OCI-LY7 (cell line): ENCODE measurements at regions of chr19 and their contacts with region 1.

Region 1: GRCh38 chr19:33406521-33407139 is 33.1 kb downstream of the CEBPG start:
- DNase-seq: peak; percentile 56
- H3K4me3 ChIP-seq: no peak overlapping the region
- H3K27ac ChIP-seq: no peak overlapping the region
- H3K4me1 ChIP-seq: no peaks in the 10 kb centered on the region
- CTCF ChIP-seq: peak; percentile 82

Region 2: GRCh38 chr19:33125929-33126388 is 280.7 kb before region 1 on chr19:
- CTCF ChIA-PET with region 1: no interaction called
- POLR2A ChIA-PET with region 1: no interaction called
- intact Hi-C with region 1: loop called (anchors 5 kb)
- DNase-seq: peak; percentile 59
- H3K4me3 ChIP-seq: no peak overlapping the region
- H3K27ac ChIP-seq: no peak overlapping the region
- H3K4me1 ChIP-seq: no peaks in the 10 kb centered on the region
- CTCF ChIP-seq: peak; percentile 90

Region 3: GRCh38 chr19:33241530-33242101 is 165.0 kb before region 1 on chr19:
- CTCF ChIA-PET with region 1: no interaction called
- POLR2A ChIA-PET with region 1: no interaction called
- intact Hi-C with region 1: loop called (anchors 1 kb)
- DNase-seq: peak; percentile 29
- H3K4me3 ChIP-seq: no peak overlapping the region
- H3K27ac ChIP-seq: no peak overlapping the region
- H3K4me1 ChIP-seq: no peaks in the 10 kb centered on the region
- CTCF ChIP-seq: peak; percentile 76

Region 4: GRCh38 chr19:33501693-33502356 is 95.2 kb after region 1 on chr19:
- CTCF ChIA-PET with region 1: no interaction called
- POLR2A ChIA-PET with region 1: no interaction called
- intact Hi-C with region 1: no loop called
- DNase-seq: no peak
- H3K4me3 ChIP-seq: no peak overlapping the region
- H3K27ac ChIP-seq: no peak overlapping the region
- H3K4me1 ChIP-seq: no peaks in the 10 kb centered on the region
- CTCF ChIP-seq: no peak